CD4-positive, alpha-beta memory T cell (primary cell): ENCODE measurements at regions of chr1 and their contacts with region 1.

Region 1: DNA sequence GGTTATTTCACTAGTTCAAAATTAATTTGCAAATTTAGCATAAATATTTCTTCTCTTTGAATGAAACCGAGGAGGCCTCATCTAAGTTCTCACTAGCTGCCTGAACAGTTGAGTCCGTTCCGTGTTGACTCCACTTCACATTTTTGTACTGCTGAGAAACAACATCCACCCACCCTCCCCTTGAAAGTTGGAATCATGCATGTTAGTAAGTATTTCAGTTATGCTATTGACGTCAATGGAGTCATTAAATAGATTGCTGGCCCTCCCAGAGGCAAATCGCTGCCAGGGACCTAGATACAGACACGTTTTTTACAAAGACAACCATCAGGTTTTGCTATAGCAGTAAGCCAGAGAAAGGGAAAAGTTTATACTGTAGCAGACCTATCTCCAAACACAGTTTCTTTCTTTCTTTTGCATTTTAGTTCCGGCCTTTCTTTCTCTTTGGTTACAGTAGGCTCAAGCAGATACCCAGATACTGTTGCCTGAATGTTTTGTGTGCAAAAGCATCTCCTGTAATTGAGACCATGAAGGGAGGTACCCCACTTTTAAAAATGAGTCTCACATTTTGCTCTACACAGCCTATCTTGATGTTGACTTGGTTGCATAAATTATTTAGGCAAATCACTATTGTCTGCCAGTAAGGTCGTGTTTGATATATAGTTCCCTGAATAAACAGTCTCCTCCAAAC is 262.6 kb upstream of the SGIP1 start:
- DNase-seq: peak; percentile 43 to 69 (median 54)
- H3K4me3 ChIP-seq: no peak overlapping the region
- H3K4me3 Mint-ChIP-seq: peak overlapping the region; percentile 2 to 74 (median 48)
- H3K27ac ChIP-seq: peak overlapping the region; percentile 18
- H3K27ac Mint-ChIP-seq: peak overlapping the region; percentile 33 to 93 (median 89)
- H3K4me1 ChIP-seq: peaks cover 55% of the 10 kb centered on the region
- H3K4me1 Mint-ChIP-seq: peaks cover 43 to 54% (median 51%) of the 10 kb centered on the region in 4 donors
- H3K27me3 ChIP-seq: no peaks in the 10 kb centered on the region
- H3K27me3 Mint-ChIP-seq: no peaks in the 10 kb centered on the region

Region 2: DNA sequence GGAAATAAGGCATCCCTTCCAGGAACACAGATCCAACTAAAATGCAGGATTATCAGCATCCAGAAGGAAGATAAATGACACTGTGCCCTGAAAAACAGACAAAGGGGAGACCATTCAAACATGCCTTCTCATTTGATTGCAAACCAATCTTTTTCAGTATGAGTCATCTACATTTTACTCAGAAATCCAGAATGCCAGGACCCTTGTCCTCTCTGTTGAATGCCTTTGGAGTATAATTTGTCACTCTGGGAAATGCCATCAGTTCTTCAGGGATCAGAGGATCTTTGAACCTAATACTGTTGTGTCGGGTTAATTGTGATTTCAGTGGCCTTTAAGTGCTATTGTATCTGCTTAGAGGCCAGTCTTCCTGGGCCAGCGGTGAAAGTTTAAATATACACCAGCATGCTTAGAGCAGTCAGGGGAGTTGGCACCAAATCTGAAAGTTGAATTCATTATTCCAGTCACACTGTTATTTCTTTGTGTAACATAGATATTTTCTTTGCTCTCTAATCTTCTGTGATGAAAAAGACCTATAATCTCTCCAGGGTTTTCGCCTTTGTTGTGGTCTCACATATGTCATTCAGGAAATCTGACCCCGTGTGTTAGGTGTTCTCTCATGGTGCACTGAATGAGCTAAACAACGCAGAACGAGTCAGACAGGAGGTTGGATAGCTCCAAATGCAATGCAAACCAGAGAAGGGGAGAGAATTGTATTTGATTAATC is 102.2 kb before region 1 on chr1:
- CTCF ChIA-PET with region 1: no interaction called
- POLR2A ChIA-PET with region 1: no interaction called
- intact Hi-C with region 1: no loop called
- DNase-seq: peak in 4 of 5 donors; percentile 6 to 46 (median 18)
- H3K4me3 ChIP-seq: no peak overlapping the region
- H3K4me3 Mint-ChIP-seq: no peak overlapping the region
- H3K27ac ChIP-seq: no peak overlapping the region
- H3K27ac Mint-ChIP-seq: peak overlapping the region in 1 of 7 donors; percentile 37
- H3K4me1 ChIP-seq: peaks cover 8% of the 10 kb centered on the region
- H3K4me1 Mint-ChIP-seq: peaks cover 8 to 10% (median 9%) of the 10 kb centered on the region in 4 donors
- H3K27me3 ChIP-seq: no peaks in the 10 kb centered on the region
- H3K27me3 Mint-ChIP-seq: peaks cover 7% of the 10 kb centered on the region in 2 donors

Region 3: GRCh38 chr1:66253330-66253921 is 17.9 kb before region 1 on chr1:
- CTCF ChIA-PET with region 1: interaction called, 34 read pairs
- POLR2A ChIA-PET with region 1: interaction called, 8 read pairs
- intact Hi-C with region 1: loop called (anchors 2 kb)
- DNase-seq: peak in 4 of 5 donors; percentile 45 to 55 (median 50)
- H3K4me3 ChIP-seq: no peak overlapping the region
- H3K4me3 Mint-ChIP-seq: no peak overlapping the region
- H3K27ac ChIP-seq: no peak overlapping the region
- H3K27ac Mint-ChIP-seq: peak overlapping the region in 1 of 7 donors; percentile 57
- H3K4me1 ChIP-seq: peaks cover 26% of the 10 kb centered on the region
- H3K4me1 Mint-ChIP-seq: peaks cover 5 to 24% (median 16%) of the 10 kb centered on the region in 4 donors
- H3K27me3 ChIP-seq: no peaks in the 10 kb centered on the region
- H3K27me3 Mint-ChIP-seq: peaks cover 0 to 2% of the 10 kb centered on the region in 2 donors

Region 4: DNA sequence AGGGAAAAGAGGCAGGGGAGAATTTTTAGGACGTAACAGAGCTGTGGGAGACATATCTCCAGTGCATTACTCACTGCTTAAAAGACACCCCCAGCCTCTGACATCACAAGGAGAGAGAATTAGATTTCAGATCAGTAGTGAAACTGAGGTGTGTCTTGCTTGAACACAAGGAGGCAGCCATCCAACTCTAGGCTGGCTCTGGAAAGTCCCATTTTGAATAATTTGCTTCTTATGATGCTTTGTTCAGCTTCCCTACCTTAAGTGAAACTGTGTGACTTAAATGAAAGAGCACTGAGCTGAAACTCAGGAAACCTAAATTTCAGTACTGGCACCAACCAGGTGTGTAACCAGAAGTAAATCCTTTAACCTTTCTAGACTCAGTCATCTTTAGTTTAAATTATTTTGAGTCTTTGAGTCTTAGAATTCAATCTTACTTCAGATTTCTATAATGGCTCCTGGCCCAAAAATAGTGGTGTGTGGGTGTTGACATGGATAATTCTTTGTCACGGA is 11.0 kb after region 1 on chr1:
- CTCF ChIA-PET with region 1: interaction called, 4 read pairs
- POLR2A ChIA-PET with region 1: interaction called, 12 read pairs
- intact Hi-C with region 1: no loop called
- DNase-seq: peak; percentile 71 to 89 (median 79)
- H3K4me3 ChIP-seq: no peak overlapping the region
- H3K4me3 Mint-ChIP-seq: peak overlapping the region in 4 of 8 donors; percentile 12 to 67 (median 42)
- H3K27ac ChIP-seq: peak overlapping the region; percentile 57
- H3K27ac Mint-ChIP-seq: peak overlapping the region; percentile 93 to 97 (median 95)
- H3K4me1 ChIP-seq: peaks cover 90% of the 10 kb centered on the region
- H3K4me1 Mint-ChIP-seq: peaks cover 70 to 93% (median 83%) of the 10 kb centered on the region in 4 donors
- H3K27me3 ChIP-seq: no peaks in the 10 kb centered on the region
- H3K27me3 Mint-ChIP-seq: peaks cover 0 to 3% of the 10 kb centered on the region in 2 donors

Region 5: GRCh38 chr1:66300972-66301451 is 29.7 kb after region 1 on chr1:
- CTCF ChIA-PET with region 1: interaction called, 6 read pairs
- POLR2A ChIA-PET with region 1: interaction called, 20 read pairs
- intact Hi-C with region 1: no loop called
- DNase-seq: peak; percentile 56 to 68 (median 58)
- H3K4me3 ChIP-seq: no peak overlapping the region
- H3K4me3 Mint-ChIP-seq: peak overlapping the region; percentile 80 to 90 (median 84)
- H3K27ac ChIP-seq: peak overlapping the region; percentile 52
- H3K27ac Mint-ChIP-seq: peak overlapping the region; percentile 83 to 98 (median 96)
- H3K4me1 ChIP-seq: peaks cover 32% of the 10 kb centered on the region
- H3K4me1 Mint-ChIP-seq: peaks cover 23 to 41% (median 30%) of the 10 kb centered on the region in 4 donors
- H3K27me3 ChIP-seq: no peaks in the 10 kb centered on the region
- H3K27me3 Mint-ChIP-seq: no peaks in the 10 kb centered on the region

Region 6: DNA sequence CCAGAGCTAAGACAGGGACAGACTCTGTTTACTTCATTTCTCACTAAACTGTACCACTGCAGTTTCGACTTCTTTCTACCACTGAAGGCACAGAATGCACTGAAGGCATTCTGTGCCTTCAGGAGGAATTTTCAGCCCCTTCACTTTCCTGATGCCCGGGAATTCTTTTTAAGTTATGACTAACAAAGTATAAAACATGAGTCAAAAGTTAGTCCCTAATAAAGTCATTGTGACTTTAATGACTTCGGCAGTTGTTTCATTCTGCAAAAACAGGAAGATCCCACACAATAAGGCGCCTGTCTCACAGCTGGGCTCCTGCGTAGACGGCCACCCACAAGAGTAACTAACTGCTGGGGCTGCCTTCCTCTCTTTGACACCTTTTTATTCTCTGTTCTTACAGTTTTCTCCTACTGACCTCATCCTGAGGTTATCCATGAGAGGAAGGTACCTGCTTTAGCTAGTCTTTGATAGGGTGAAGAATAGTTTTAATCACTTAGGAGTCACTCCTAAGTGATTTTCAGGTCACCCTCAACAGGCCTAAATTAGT is 78.7 kb after region 1 on chr1:
- CTCF ChIA-PET with region 1: interaction called, 10 read pairs
- POLR2A ChIA-PET with region 1: interaction called, 24 read pairs
- intact Hi-C with region 1: no loop called
- DNase-seq: peak; percentile 73 to 82 (median 77)
- H3K4me3 ChIP-seq: peak overlapping the region in 1 of 2 donors; percentile 11
- H3K4me3 Mint-ChIP-seq: peak overlapping the region; percentile 73 to 83 (median 80)
- H3K27ac ChIP-seq: peak overlapping the region; percentile 70
- H3K27ac Mint-ChIP-seq: peak overlapping the region; percentile 89 to 100 (median 97)
- H3K4me1 ChIP-seq: peaks cover 98% of the 10 kb centered on the region
- H3K4me1 Mint-ChIP-seq: peaks cover 82 to 97% (median 89%) of the 10 kb centered on the region in 4 donors
- H3K27me3 ChIP-seq: no peaks in the 10 kb centered on the region
- H3K27me3 Mint-ChIP-seq: no peaks in the 10 kb centered on the region

Region 7: GRCh38 chr1:66436378-66437145 is 165.2 kb after region 1 on chr1:
- CTCF ChIA-PET with region 1: interaction called, 56 read pairs
- POLR2A ChIA-PET with region 1: interaction called, 5 read pairs
- intact Hi-C with region 1: no loop called
- DNase-seq: peak; percentile 42 to 56 (median 48)
- H3K4me3 ChIP-seq: no peak overlapping the region
- H3K4me3 Mint-ChIP-seq: peak overlapping the region in 4 of 8 donors; percentile 4 to 61 (median 31)
- H3K27ac ChIP-seq: no peak overlapping the region
- H3K27ac Mint-ChIP-seq: peak overlapping the region in 6 of 7 donors; percentile 0 to 92 (median 52)
- H3K4me1 ChIP-seq: peaks cover 21% of the 10 kb centered on the region
- H3K4me1 Mint-ChIP-seq: peaks cover 8 to 27% (median 19%) of the 10 kb centered on the region in 4 donors
- H3K27me3 ChIP-seq: no peaks in the 10 kb centered on the region
- H3K27me3 Mint-ChIP-seq: no peaks in the 10 kb centered on the region